Dorsolateral prefrontal cortex (tissue), 120 donors: ENCODE measurements at regions of chr19 and their contacts with region 1.

Region 1: GRCh38 chr19:1905071-1905862 is at the starts of genes ADAT3 and SCAMP4:
- DNase-seq: peak; percentile 97 to 100 (median 98)
- H3K4me3 ChIP-seq: peak within 1 kb of the TSS; percentile 47 to 86 (median 68)
- H3K27ac ChIP-seq: peak within 1 kb of the TSS in 58 of 59 donors; percentile 29 to 98 (median 89)
- H3K27me3 ChIP-seq: no peaks in the 10 kb centered on the region
- CTCF ChIP-seq: peak in 25 of 56 donors; percentile 5 to 51 (median 19)
- total RNA-seq, gene ADAT3: 2.5 to 11.7 (median 5.9) TPM
- total RNA-seq, gene SCAMP4: 39.8 to 90.1 (median 58.7) TPM

Region 2: DNA sequence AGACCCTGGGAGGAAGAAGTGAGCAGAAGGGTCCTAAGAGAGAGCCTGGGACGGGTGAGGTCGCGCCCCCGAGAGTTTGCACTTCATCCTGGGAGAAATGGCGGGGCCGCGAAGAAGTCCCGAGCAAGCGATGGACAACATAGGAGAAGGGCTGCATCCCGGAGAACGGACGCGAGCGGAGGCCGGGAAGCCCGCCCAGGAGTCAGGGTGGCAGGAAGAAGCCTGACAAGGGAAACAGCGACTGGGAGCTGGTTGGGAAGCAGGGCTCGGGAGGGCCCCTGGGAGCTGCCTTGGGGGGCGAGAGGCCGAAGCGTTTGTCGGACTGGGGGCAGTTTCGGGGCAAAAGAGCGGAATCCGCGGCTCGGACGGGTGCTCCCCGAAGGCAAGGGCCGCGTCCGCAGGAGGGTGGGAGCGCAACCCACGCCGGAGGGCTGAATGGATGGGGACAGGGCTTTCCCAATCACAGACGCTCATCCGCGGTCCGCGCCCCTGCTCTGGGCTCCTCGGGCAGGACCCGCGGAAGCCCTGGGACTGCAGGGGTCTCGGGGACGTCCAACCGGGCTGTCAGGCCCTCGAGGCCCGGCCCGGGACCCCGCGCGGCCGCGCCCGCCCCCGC is 20.4 kb before region 1 on chr19:
- intact Hi-C with region 1: loop called in 1 of 2 experiments (anchors 1 kb)
- DNase-seq: no peak
- H3K4me3 ChIP-seq: peak overlapping the region; percentile 66 to 98 (median 89)
- H3K27ac ChIP-seq: peak overlapping the region in 58 of 59 donors; percentile 18 to 97 (median 92)
- H3K27me3 ChIP-seq: no peaks in the 10 kb centered on the region
- CTCF ChIP-seq: no peak